Cardiac septum (tissue), 1 donor: ENCODE measurements at regions of chr3 and their contacts with region 1.

Region 1: DNA sequence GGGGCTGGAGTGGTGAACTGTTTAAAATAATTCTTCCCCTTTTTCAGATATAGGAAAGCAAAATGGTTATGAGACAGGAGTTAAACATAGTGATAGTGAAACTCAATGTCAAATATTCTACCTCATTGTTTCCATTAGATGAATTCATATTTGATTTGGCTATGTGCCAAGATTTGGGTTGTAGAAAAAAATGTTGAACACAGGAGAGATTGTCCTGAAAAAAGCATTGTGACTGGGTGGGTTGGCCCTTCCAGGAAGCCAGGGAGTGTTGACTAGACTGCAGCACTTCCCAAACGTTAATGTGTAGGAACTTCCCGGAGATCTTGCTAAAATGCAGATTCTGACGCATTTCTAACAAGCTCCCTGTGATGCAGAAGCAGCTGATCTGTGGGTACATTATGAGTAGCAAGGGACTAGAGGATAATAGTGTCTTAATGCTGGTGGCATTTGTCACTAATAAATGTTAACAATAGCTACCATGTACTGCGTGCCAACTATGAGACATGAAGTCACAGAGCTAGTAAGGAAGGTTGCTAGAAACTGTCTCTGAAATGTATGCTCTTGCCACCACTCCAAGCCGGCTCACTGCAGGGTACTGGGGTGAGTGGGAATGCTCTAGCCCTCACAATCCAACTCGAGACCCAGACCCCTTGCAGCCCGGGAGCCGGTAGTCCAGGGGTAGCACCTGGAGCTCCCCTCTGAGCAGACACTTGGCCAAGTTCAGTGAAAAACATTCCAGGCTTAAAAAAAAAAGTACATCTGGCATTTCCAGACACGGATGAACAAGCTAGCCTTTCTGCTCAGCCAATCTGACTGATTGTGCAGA is 120.6 kb downstream of the CD47 start:
- DNase-seq: no peak

Region 2: GRCh38 chr3:107987036-107987947 is 17.1 kb after region 1 on chr3:
- intact Hi-C with region 1: loop called (anchors 2 kb)
- DNase-seq: peak; percentile 78

Region 3: GRCh38 chr3:108017587-108017986 is 47.4 kb after region 1 on chr3:
- intact Hi-C with region 1: no loop called
- DNase-seq: no peak